ENCODE measurements at regions of chr2 and their contacts with region 1.

Region 1: GRCh38 chr2:236512902-236513435 is 56.7 kb upstream of the ACKR3 start:
- DNase-seq: peak; percentile 82
- H3K4me3 Mint-ChIP-seq: no peak overlapping the region
- H3K27ac Mint-ChIP-seq: no peak overlapping the region
- H3K4me1 Mint-ChIP-seq: peaks cover 11% of the 10 kb centered on the region
- H3K27me3 Mint-ChIP-seq: peaks cover 7% of the 10 kb centered on the region

Region 2: DNA sequence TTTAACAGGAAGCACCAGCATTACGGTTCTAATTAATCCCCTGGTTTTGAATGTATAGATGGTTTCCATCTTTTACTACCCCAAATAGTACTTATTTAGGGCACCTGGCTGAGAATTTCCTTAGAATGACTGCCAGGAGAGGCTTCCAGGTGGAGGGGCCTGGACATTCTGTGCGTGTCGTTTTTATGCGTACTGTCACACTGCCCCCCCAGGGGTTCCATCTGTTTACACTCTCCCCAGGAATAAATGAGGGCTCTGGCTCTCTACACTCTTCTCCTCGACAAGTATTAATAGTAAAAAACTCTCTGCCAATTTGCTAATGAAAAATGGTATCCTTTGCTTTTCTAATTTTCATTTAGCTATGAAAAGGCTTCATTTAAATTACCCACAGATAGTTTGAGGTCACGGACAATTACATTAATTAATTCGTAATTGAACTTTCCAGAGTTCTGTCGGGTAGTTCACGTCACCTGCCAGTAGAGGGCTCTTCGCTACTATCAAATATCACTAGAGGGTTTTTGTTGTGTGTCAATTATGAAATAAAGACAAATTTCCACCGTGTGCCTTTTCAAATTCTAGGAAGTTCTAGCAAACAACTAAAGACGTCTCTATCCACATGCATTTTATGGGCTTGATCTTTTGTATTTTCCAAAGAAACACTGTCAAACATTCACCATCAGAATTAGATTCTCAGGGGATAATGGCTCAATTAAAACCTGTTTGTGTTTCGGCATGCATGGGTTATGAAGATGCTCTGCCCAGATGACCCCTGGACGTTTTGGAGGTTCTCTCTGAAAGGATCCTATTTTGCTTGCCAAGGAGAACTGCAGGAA is 160.0 kb before region 1 on chr2:
- CTCF ChIA-PET with region 1: interaction called, 6 read pairs
- intact Hi-C with region 1: loop called (anchors 2 kb)
- DNase-seq: peak; percentile 45
- H3K4me3 Mint-ChIP-seq: no peak overlapping the region
- H3K27ac Mint-ChIP-seq: no peak overlapping the region
- H3K4me1 Mint-ChIP-seq: no peaks in the 10 kb centered on the region
- H3K27me3 Mint-ChIP-seq: no peaks in the 10 kb centered on the region

Region 3: GRCh38 chr2:236536727-236537398 is 23.9 kb after region 1 on chr2:
- CTCF ChIA-PET with region 1: interaction called, 15 read pairs
- intact Hi-C with region 1: loop called (anchors 2 kb)
- DNase-seq: peak; percentile 69
- H3K4me3 Mint-ChIP-seq: peak overlapping the region; percentile 86
- H3K27ac Mint-ChIP-seq: peak overlapping the region; percentile 91
- H3K4me1 Mint-ChIP-seq: peaks cover 51% of the 10 kb centered on the region
- H3K27me3 Mint-ChIP-seq: no peaks in the 10 kb centered on the region

Region 4: GRCh38 chr2:236551471-236552211 is 38.7 kb after region 1 on chr2:
- CTCF ChIA-PET with region 1: interaction called, 17 read pairs
- intact Hi-C with region 1: loop called (anchors 1 kb)
- DNase-seq: no peak
- H3K4me3 Mint-ChIP-seq: no peak overlapping the region
- H3K27ac Mint-ChIP-seq: peak overlapping the region; percentile 64
- H3K4me1 Mint-ChIP-seq: peaks cover 93% of the 10 kb centered on the region
- H3K27me3 Mint-ChIP-seq: no peaks in the 10 kb centered on the region

Region 5: GRCh38 chr2:236569573-236569973 is 56.6 kb after region 1 on chr2 and contains the start of gene ACKR3:
- CTCF ChIA-PET with region 1: interaction called, 172 read pairs
- intact Hi-C with region 1: loop called (anchors 1 kb)
- DNase-seq: peak; percentile 78
- H3K4me3 Mint-ChIP-seq: peak within 1 kb of the TSS; percentile 63
- H3K27ac Mint-ChIP-seq: no peak within 1 kb of the TSS
- H3K4me1 Mint-ChIP-seq: peaks cover 13% of the 10 kb centered on the region
- H3K27me3 Mint-ChIP-seq: no peaks in the 10 kb centered on the region
- total RNA-seq, gene ACKR3: 0.45 to 0.49 TPM

Region 6: DNA sequence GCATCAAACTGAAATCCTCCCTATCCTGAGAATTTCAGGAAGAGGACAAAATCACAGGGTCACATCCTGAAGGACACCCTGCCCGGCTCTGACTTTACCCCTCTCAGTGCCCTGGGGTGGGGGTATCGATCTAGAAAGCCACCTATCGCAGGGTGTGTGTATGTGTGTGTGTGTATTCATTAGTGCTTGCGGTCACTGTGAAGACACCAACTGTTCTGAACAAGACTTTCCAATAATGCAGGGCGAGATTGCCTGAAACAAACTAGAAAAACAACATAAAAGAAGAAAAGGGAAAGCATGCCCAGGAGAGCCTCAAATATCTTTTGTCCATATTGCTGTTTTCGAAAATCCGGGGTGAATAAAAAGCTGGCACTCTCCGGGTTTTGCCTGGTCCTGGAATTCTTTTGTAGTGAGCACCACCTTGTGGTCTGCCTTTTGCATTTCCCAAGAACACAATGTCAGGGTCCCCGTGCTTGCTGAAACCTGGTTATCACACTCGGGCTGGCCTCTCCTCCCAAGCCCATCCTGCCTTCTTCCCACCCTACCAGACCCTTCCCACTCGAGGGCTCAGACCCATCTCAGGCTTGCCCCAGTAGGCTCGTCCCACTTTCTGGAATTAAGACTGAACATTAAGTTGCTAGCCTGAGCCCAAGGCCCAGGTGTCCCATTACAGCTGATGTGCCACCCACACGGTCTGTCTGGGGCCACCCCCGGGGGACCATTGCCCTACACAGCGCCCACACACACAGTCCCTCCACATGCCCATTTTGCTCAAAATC is 547.8 kb after region 1 on chr2:
- CTCF ChIA-PET with region 1: interaction called, 3 read pairs
- intact Hi-C with region 1: loop called (anchors 1 kb)
- DNase-seq: peak; percentile 40
- H3K4me3 Mint-ChIP-seq: no peak overlapping the region
- H3K27ac Mint-ChIP-seq: no peak overlapping the region
- H3K4me1 Mint-ChIP-seq: peaks cover 13% of the 10 kb centered on the region
- H3K27me3 Mint-ChIP-seq: no peaks in the 10 kb centered on the region